ENCODE measurements at regions of chrX and their contacts with region 1.

Region 1: GRCh38 chrX:140733769-140734342 is 24.3 kb downstream of the LINC00632 start:
- DNase-seq: peak; percentile 57
- ATAC-seq: peak; percentile 98
- H3K4me3 ChIP-seq: no peak overlapping the region
- H3K27ac ChIP-seq: no peak overlapping the region
- H3K4me1 ChIP-seq: no peaks in the 10 kb centered on the region
- H3K27me3 ChIP-seq: no peaks in the 10 kb centered on the region
- CTCF ChIP-seq: peak; percentile 84
- POLR2A ChIP-seq: no peak
- RAD21 ChIP-seq: peak; percentile 90

Region 2: GRCh38 chrX:140572724-140573123 is 161.1 kb before region 1 on chrX:
- CTCF ChIA-PET with region 1: no interaction called
- POLR2A ChIA-PET with region 1: no interaction called
- dilution Hi-C with region 1: no loop called
- in situ Hi-C with region 1: no loop called
- intact Hi-C with region 1: loop called (anchors 2 kb)
- DNase-seq: peak; percentile 34
- ATAC-seq: peak; percentile 85; the same call in 1 of the 2 replicates
- H3K4me3 ChIP-seq: no peak overlapping the region
- H3K27ac ChIP-seq: no peak overlapping the region
- H3K4me1 ChIP-seq: no peaks in the 10 kb centered on the region
- H3K27me3 ChIP-seq: no peaks in the 10 kb centered on the region
- CTCF ChIP-seq: peak; percentile 58
- POLR2A ChIP-seq: no peak
- RAD21 ChIP-seq: peak; percentile 41

Region 3: GRCh38 chrX:140664939-140665338 is 68.9 kb before region 1 on chrX:
- CTCF ChIA-PET with region 1: no interaction called
- POLR2A ChIA-PET with region 1: no interaction called
- dilution Hi-C with region 1: no loop called
- in situ Hi-C with region 1: no loop called
- intact Hi-C with region 1: no loop called
- DNase-seq: peak; percentile 18
- ATAC-seq: no peak
- H3K4me3 ChIP-seq: no peak overlapping the region
- H3K27ac ChIP-seq: no peak overlapping the region
- H3K4me1 ChIP-seq: no peaks in the 10 kb centered on the region
- H3K27me3 ChIP-seq: no peaks in the 10 kb centered on the region
- CTCF ChIP-seq: peak; percentile 43
- POLR2A ChIP-seq: no peak
- RAD21 ChIP-seq: peak; percentile 47

Region 4: DNA sequence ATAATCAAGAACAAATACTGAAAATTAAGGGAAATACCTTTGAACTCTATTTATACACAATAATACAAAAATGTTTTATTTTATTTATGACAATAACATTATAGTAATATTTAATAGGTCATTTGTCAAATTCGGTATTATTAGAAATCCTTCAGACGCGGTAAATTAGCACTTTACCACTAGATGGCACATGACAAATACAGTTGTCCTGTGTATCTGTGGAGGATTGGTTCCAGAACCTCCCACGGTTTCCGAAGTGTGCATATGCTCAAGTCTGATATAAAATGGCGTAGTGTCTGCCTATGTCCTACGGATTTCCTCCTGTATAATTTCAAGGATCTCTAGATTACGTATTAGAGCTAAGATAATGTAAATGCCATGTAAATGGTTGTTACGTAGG is 32.4 kb before region 1 on chrX:
- CTCF ChIA-PET with region 1: interaction called, 4 read pairs
- POLR2A ChIA-PET with region 1: no interaction called
- dilution Hi-C with region 1: no loop called
- in situ Hi-C with region 1: no loop called
- intact Hi-C with region 1: loop called (anchors 1 kb)
- DNase-seq: peak; percentile 37
- ATAC-seq: peak; percentile 53; the same call in 1 of the 2 replicates
- H3K4me3 ChIP-seq: no peak overlapping the region
- H3K27ac ChIP-seq: no peak overlapping the region
- H3K4me1 ChIP-seq: no peaks in the 10 kb centered on the region
- H3K27me3 ChIP-seq: no peaks in the 10 kb centered on the region
- CTCF ChIP-seq: peak; percentile 47
- POLR2A ChIP-seq: no peak
- RAD21 ChIP-seq: peak; percentile 35; the same call in 1 of the 2 replicates

Region 5: DNA sequence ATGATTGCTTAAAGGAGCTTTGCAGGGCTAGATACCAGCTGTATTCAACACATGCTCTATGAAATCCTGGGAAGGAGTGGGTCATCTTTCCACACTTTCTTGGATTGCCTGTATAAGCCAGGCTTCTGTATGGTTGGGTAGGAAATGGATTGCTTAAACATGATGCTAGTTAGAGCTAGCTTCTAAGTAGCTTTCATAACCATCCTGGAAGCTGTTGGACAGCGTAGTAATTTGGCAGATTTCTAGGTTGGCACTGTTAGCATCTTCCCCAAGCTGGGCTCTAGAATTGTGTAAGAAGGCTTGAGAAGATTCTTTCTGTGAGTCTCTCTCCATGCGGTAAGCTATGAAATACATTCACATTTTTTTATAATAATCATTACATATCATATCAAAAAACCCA is 103.0 kb after region 1 on chrX:
- CTCF ChIA-PET with region 1: no interaction called
- POLR2A ChIA-PET with region 1: no interaction called
- dilution Hi-C with region 1: no loop called
- in situ Hi-C with region 1: no loop called
- intact Hi-C with region 1: no loop called
- DNase-seq: no peak
- ATAC-seq: no peak
- H3K4me3 ChIP-seq: no peak overlapping the region
- H3K27ac ChIP-seq: no peak overlapping the region
- H3K4me1 ChIP-seq: no peaks in the 10 kb centered on the region
- H3K27me3 ChIP-seq: no peaks in the 10 kb centered on the region
- CTCF ChIP-seq: no peak
- POLR2A ChIP-seq: no peak
- RAD21 ChIP-seq: no peak

Region 6: DNA sequence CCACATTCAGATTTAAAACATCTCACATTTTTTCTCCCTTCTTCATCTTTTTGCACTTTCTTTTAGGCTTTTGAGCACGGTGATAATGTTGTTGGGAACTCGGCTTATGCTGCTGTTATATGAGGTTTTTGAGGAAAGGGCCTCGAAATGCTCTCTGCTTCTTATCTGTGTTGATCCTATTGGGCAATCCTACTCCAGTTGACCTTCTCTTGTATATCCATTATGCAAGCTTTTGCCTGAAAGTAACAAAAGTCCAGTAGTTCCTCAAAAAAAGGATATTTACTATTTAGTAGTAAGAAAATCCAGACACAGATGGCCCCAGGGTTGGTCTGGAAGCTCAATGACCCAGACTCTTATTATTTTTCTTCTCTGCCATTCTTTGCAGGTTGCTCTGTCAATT is 210.9 kb after region 1 on chrX:
- CTCF ChIA-PET with region 1: no interaction called
- POLR2A ChIA-PET with region 1: no interaction called
- dilution Hi-C with region 1: no loop called
- in situ Hi-C with region 1: no loop called
- intact Hi-C with region 1: no loop called
- DNase-seq: no peak
- ATAC-seq: no peak
- H3K4me3 ChIP-seq: no peak overlapping the region
- H3K27ac ChIP-seq: no peak overlapping the region
- H3K4me1 ChIP-seq: no peaks in the 10 kb centered on the region
- H3K27me3 ChIP-seq: no peaks in the 10 kb centered on the region
- CTCF ChIP-seq: no peak
- POLR2A ChIP-seq: no peak
- RAD21 ChIP-seq: no peak